Activated CD8-positive, alpha-beta T cell treated with anti-CD3 and anti-CD28 coated beads, Interleukin-2, amount 10 ng/mL, durations not matched to agents 7 days and 5 days (primary cell): ENCODE measurements at regions of chr1 and their contacts with region 1.

Region 1: GRCh38 chr1:24635195-24635843 is 7.8 kb upstream of the SRRM1 start:
- DNase-seq: no peak
- ATAC-seq: peak; percentile 84
- H3K4me3 Mint-ChIP-seq: no peak overlapping the region
- H3K27ac Mint-ChIP-seq: no peak overlapping the region
- H3K4me1 Mint-ChIP-seq: peaks cover 5% of the 10 kb centered on the region
- H3K27me3 Mint-ChIP-seq: peaks cover 14% of the 10 kb centered on the region

Region 2: GRCh38 chr1:24541711-24542346 is 93.5 kb before region 1 on chr1:
- CTCF ChIA-PET with region 1: interaction called, 19 read pairs
- POLR2A ChIA-PET with region 1: no interaction called
- DNase-seq: peak; percentile 50
- ATAC-seq: no peak
- H3K4me3 Mint-ChIP-seq: no peak overlapping the region
- H3K27ac Mint-ChIP-seq: no peak overlapping the region
- H3K4me1 Mint-ChIP-seq: peaks cover 60% of the 10 kb centered on the region
- H3K27me3 Mint-ChIP-seq: no peaks in the 10 kb centered on the region